Naive thymus-derived CD4-positive, alpha-beta T cell (primary cell): ENCODE measurements at regions of chr2 and their contacts with region 1.

Region 1: GRCh38 chr2:148644883-148645538 is 460 bp downstream of the EPC2 start:
- DNase-seq: peak; percentile 90 to 99 (median 95)
- ATAC-seq: peak; percentile 84
- H3K4me3 ChIP-seq: peak overlapping the region; percentile 69
- H3K4me3 Mint-ChIP-seq: peak overlapping the region; percentile 79 to 99 (median 96)
- H3K27ac ChIP-seq: peak overlapping the region; percentile 94
- H3K27ac Mint-ChIP-seq: peak overlapping the region; percentile 81 to 99 (median 97)
- H3K4me1 ChIP-seq: peaks cover 21 to 22% of the 10 kb centered on the region in 2 donors
- H3K4me1 Mint-ChIP-seq: peaks cover 32 to 48% (median 37%) of the 10 kb centered on the region in 7 donors
- H3K27me3 ChIP-seq: no peaks in the 10 kb centered on the region
- H3K27me3 Mint-ChIP-seq: peaks cover 0 to 12% (median 0%) of the 10 kb centered on the region in 5 donors

Region 2: DNA sequence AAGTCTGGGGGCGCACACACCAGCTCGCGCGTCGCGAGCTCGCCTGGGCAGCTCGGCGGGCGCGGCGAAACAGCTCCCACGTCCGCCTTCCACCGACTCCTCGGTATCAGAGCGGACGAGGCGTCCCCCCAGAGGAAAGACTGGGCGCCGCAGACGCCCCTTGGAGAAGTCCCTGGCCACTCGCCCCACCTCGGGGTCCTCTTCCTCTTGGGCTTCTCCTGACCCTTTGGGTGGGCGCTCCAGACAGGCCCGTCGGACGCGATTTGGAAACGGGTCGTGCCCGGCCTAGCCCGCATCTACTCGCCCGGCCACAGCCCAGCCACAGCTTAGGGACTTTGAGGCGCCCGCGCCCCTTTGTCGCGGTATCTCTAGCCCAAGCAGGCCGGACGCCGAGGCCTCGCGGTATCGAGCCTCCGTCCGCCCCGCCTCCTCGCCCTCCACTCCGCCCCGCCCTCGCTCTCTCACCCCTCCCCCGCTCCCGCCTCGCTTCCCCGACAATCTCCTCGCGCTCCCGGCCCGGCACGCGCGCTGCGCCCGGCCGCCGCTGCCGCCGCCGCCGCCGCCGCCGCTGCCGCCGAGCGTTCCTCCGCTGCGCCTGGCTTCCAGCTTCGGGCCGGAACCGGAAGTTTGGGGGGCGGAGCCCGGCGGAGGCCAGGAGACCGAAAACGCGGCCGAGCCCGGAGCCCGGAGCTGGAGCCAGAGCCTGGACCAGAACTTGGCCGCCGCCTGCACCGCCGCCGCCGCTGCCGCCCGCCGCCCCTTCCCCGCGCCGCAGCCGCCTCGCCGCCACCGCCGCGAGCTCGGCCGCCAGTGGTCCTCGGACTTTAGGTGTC is 800.9 kb before region 1 on chr2:
- CTCF ChIA-PET with region 1: no interaction called
- POLR2A ChIA-PET with region 1: no interaction called
- intact Hi-C with region 1: loop called (anchors 2 kb)
- DNase-seq: peak; percentile 77 to 90 (median 86)
- ATAC-seq: peak; percentile 89
- H3K4me3 ChIP-seq: peak overlapping the region; percentile 79
- H3K4me3 Mint-ChIP-seq: peak overlapping the region; percentile 88 to 99 (median 94)
- H3K27ac ChIP-seq: peak overlapping the region; percentile 66
- H3K27ac Mint-ChIP-seq: peak overlapping the region; percentile 83 to 97 (median 86)
- H3K4me1 ChIP-seq: peaks cover 15 to 31% of the 10 kb centered on the region in 2 donors
- H3K4me1 Mint-ChIP-seq: peaks cover 33 to 49% (median 36%) of the 10 kb centered on the region in 7 donors
- H3K27me3 ChIP-seq: no peaks in the 10 kb centered on the region
- H3K27me3 Mint-ChIP-seq: peaks cover 0 to 67% (median 5%) of the 10 kb centered on the region in 5 donors

Region 3: DNA sequence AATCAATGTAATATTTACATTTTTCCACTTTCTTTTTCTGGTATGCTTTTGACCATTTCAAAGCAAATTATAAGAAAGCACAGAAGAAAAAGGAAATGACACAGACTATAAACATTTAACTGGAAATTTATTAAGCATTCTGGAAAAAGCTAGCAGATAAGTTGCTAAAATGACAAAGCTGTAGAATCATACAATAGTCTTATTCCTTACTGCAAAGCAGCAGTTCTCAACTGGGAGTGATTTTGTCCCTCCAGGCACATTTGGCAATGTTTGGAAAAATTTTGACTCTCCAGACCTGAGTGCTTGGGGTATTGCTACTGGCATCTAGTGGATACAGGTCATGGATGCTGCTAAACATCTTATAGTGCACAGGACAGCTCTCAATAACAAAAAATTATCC is 549.0 kb before region 1 on chr2:
- CTCF ChIA-PET with region 1: no interaction called
- POLR2A ChIA-PET with region 1: no interaction called
- intact Hi-C with region 1: no loop called
- DNase-seq: no peak
- ATAC-seq: no peak
- H3K4me3 ChIP-seq: no peak overlapping the region
- H3K4me3 Mint-ChIP-seq: no peak overlapping the region
- H3K27ac ChIP-seq: no peak overlapping the region
- H3K27ac Mint-ChIP-seq: no peak overlapping the region
- H3K4me1 ChIP-seq: no peaks in the 10 kb centered on the region
- H3K4me1 Mint-ChIP-seq: peaks cover 0 to 11% (median 4%) of the 10 kb centered on the region in 7 donors
- H3K27me3 ChIP-seq: no peaks in the 10 kb centered on the region
- H3K27me3 Mint-ChIP-seq: no peaks in the 10 kb centered on the region

Region 4: DNA sequence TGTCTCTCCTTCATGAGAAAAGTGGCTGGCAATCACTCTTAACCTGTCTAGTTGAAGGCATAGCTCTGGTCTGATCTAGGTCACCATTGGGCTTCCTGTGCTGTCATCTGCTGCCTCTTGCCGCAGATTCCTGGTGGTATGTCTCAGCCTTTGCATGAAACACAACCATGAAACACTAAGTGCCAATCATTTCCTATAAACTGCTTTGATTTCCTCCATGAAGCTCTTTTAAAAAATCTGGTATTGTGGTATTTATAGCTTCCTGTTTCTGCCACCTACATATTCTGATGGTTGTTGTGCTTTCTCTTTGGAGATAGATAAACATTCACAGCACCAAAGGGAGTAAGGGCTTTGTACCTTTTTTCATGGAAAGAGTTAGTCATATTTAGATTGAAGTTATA is 120.5 kb before region 1 on chr2:
- CTCF ChIA-PET with region 1: interaction called, 4 read pairs
- POLR2A ChIA-PET with region 1: interaction called, 22 read pairs
- intact Hi-C with region 1: loop called (anchors 1 kb)
- DNase-seq: peak in 8 of 9 donors; percentile 44 to 93 (median 86)
- ATAC-seq: peak; percentile 94
- H3K4me3 ChIP-seq: peak overlapping the region; percentile 28
- H3K4me3 Mint-ChIP-seq: peak overlapping the region; percentile 56 to 92 (median 76)
- H3K27ac ChIP-seq: peak overlapping the region; percentile 56
- H3K27ac Mint-ChIP-seq: peak overlapping the region; percentile 85 to 98 (median 94)
- H3K4me1 ChIP-seq: peaks cover 46 to 75% of the 10 kb centered on the region in 2 donors
- H3K4me1 Mint-ChIP-seq: peaks cover 58 to 90% (median 88%) of the 10 kb centered on the region in 7 donors
- H3K27me3 ChIP-seq: no peaks in the 10 kb centered on the region
- H3K27me3 Mint-ChIP-seq: no peaks in the 10 kb centered on the region

Region 5: GRCh38 chr2:148578493-148578884 is 66.5 kb before region 1 on chr2:
- CTCF ChIA-PET with region 1: no interaction called
- POLR2A ChIA-PET with region 1: no interaction called
- intact Hi-C with region 1: no loop called
- DNase-seq: no peak
- ATAC-seq: no peak
- H3K4me3 ChIP-seq: no peak overlapping the region
- H3K4me3 Mint-ChIP-seq: no peak overlapping the region
- H3K27ac ChIP-seq: no peak overlapping the region
- H3K27ac Mint-ChIP-seq: no peak overlapping the region
- H3K4me1 ChIP-seq: no peaks in the 10 kb centered on the region
- H3K4me1 Mint-ChIP-seq: peaks cover 0 to 23% (median 10%) of the 10 kb centered on the region in 7 donors
- H3K27me3 ChIP-seq: no peaks in the 10 kb centered on the region
- H3K27me3 Mint-ChIP-seq: peaks cover 0 to 28% (median 6%) of the 10 kb centered on the region in 5 donors

Region 6: DNA sequence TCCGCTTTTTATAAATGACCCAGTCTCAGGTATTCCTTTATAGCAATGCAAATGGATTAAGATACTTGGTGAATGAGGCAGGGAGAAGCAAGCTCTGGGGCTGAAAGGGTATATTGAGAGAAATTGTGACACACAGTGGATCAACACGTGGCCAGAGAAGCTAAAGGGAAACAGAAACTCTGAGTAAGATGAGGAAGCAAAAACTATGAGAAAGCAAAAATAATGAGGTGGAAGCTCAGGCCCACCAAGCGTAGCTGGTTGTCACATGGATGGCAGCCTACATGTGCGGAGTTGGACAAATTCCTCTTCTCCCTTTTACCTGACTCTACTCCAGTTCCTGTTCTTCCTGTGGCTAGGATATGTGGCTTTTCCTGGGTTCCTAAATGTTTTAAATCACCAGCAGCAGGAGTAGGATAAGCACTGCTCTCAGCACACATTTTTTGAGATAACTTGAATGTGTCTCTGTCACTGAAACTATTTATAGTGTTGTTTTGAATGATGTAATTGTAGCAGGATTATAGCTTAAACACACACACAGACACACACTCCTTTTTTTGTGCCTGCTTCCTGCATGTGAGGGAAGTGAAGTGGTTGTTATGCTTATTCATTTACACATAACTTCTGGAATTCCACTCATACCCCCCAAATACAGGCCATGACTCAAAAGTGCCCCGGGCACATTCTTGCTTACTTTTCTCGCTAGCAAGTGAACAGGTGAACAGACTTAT is 30.5 kb before region 1 on chr2:
- CTCF ChIA-PET with region 1: no interaction called
- POLR2A ChIA-PET with region 1: no interaction called
- intact Hi-C with region 1: loop called in 1 of 2 experiments (anchors 1 kb)
- DNase-seq: no peak
- ATAC-seq: peak; percentile 70
- H3K4me3 ChIP-seq: no peak overlapping the region
- H3K4me3 Mint-ChIP-seq: peak overlapping the region in 1 of 10 donors; percentile 43
- H3K27ac ChIP-seq: no peak overlapping the region
- H3K27ac Mint-ChIP-seq: peak overlapping the region in 3 of 9 donors; percentile 7 to 73 (median 60)
- H3K4me1 ChIP-seq: no peaks in the 10 kb centered on the region
- H3K4me1 Mint-ChIP-seq: peaks cover 4 to 15% (median 7%) of the 10 kb centered on the region in 7 donors
- H3K27me3 ChIP-seq: no peaks in the 10 kb centered on the region
- H3K27me3 Mint-ChIP-seq: peaks cover 0 to 3% (median 0%) of the 10 kb centered on the region in 5 donors

Region 7: DNA sequence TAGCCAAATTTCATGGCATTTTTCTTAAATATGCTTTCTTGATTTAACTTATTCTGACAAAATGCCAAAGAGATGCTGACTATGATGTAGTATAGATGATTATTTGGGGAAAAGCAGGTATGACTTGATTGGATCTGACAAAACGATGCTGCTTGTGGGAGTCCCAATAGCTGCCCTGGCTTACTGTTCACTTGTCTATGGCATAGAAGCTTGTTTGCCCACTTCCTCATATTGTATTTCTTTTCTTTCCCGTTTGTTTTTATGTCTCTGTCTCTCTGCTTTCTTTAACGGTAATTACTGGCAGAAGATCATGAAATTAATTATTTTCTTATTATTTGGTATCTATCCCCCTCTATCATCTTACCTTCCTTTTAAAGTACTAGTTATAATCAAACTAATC is 42.5 kb after region 1 on chr2:
- CTCF ChIA-PET with region 1: no interaction called
- POLR2A ChIA-PET with region 1: interaction called, 3 read pairs
- intact Hi-C with region 1: loop called in 1 of 2 experiments (anchors 2 kb)
- DNase-seq: no peak
- ATAC-seq: no peak
- H3K4me3 ChIP-seq: no peak overlapping the region
- H3K4me3 Mint-ChIP-seq: peak overlapping the region in 2 of 10 donors; percentile 17 to 19
- H3K27ac ChIP-seq: no peak overlapping the region
- H3K27ac Mint-ChIP-seq: peak overlapping the region in 1 of 9 donors; percentile 60
- H3K4me1 ChIP-seq: peaks cover 3 to 17% of the 10 kb centered on the region in 2 donors
- H3K4me1 Mint-ChIP-seq: peaks cover 22 to 88% (median 84%) of the 10 kb centered on the region in 7 donors
- H3K27me3 ChIP-seq: no peaks in the 10 kb centered on the region
- H3K27me3 Mint-ChIP-seq: no peaks in the 10 kb centered on the region

Region 8: DNA sequence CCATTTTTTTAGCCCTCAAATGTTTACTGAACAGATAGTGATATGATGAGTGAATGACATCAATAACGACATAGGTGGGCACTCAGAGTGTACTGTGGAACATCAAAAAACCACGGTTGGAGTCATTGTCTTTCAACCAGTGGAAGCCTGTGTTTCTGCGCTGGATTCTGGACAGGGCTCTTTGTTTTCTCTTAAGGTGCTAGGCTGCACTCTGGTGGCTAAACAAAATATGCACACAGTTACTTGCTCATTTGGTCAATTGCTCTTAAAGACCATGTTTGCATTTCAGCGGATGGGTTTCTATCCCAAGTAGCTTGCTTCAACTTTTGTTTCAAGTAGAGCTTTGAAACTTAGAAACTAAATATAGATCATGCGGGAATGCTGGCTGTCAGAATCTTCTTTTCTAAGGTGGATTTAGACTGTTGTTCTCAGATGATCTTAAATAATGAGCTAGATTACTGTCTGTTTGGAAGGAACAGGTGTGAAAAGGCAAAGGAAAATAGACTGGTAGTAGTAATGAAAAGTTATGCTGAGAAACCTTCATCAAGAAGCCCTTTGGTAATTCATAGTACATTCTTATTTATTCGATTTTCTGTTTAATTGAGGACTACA is 345.0 kb after region 1 on chr2:
- CTCF ChIA-PET with region 1: no interaction called
- POLR2A ChIA-PET with region 1: no interaction called
- intact Hi-C with region 1: loop called (anchors 1 kb)
- DNase-seq: peak in 8 of 9 donors; percentile 28 to 65 (median 56)
- ATAC-seq: peak; percentile 86
- H3K4me3 ChIP-seq: no peak overlapping the region
- H3K4me3 Mint-ChIP-seq: no peak overlapping the region
- H3K27ac ChIP-seq: no peak overlapping the region
- H3K27ac Mint-ChIP-seq: no peak overlapping the region
- H3K4me1 ChIP-seq: no peaks in the 10 kb centered on the region
- H3K4me1 Mint-ChIP-seq: peaks cover 0 to 4% (median 4%) of the 10 kb centered on the region in 7 donors
- H3K27me3 ChIP-seq: no peaks in the 10 kb centered on the region
- H3K27me3 Mint-ChIP-seq: no peaks in the 10 kb centered on the region